HCT116 (cell line): ENCODE measurements at regions of chr11 and their contacts with region 1.

Region 1: GRCh38 chr11:69683764-69684333 is 8.7 kb upstream of the LTO1 start:
- DNase-seq: no peak
- ATAC-seq: peak; percentile 78
- H3K4me3 ChIP-seq: no peak overlapping the region
- H3K27ac ChIP-seq: no peak overlapping the region
- H3K4me1 ChIP-seq: peaks cover 11 to 45% of the 10 kb centered on the region in 2 experiments; a peak in 3 of 4 replicates
- H3K27me3 ChIP-seq: no peaks in the 10 kb centered on the region
- CTCF ChIP-seq: peak; percentile 56 to 73 (median 71); a peak in 5 of 6 replicates
- POLR2A ChIP-seq: no peak
- RAD21 ChIP-seq: peak; percentile 92

Region 2: DNA sequence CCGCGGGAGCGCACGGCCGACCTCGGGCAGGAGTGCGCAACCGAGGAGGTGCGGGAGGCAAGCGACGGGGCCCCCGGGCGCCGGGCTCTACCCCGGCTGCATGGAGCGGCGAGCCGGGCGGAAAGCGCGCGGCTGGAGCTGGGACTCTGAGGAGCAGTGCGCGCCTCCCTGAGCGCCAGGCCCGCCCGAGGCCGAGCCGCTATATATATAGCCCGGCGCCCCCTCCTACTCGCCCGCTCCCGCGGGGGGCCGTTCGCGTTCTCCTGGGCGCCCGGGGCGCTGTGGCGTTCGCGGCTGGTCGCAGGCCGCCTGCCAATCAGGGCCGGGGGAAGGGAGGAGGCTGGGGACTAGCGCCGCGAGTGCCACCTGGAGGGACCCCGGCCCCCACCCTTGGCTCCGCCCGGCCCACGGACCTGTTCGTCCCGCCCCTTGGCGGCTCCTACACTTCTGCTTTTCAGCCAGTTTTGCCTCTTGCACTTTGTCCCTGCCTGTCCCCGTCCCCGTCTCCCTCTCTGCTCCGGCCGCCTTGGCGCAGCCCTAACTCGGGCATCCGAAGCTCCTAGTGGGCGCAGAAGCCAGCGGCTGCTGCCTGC is 91.4 kb after region 1 on chr11 and contains the start of gene FGF4:
- CTCF ChIA-PET with region 1: no interaction called
- POLR2A ChIA-PET with region 1: no interaction called
- RAD21 ChIA-PET with region 1: no interaction called
- intact Hi-C with region 1: no loop called
- DNase-seq: no peak
- ATAC-seq: no peak
- H3K4me3 ChIP-seq: no peak within 1 kb of the TSS
- H3K27ac ChIP-seq: no peak within 1 kb of the TSS
- H3K4me1 ChIP-seq: no peaks in the 10 kb centered on the region
- H3K27me3 ChIP-seq: no peaks in the 10 kb centered on the region
- CTCF ChIP-seq: no peak
- POLR2A ChIP-seq: no peak
- RAD21 ChIP-seq: no peak
- total RNA-seq, gene FGF4: not detected

Region 3: GRCh38 chr11:69801519-69802335 is 117.9 kb after region 1 on chr11:
- CTCF ChIA-PET with region 1: no interaction called
- POLR2A ChIA-PET with region 1: no interaction called
- RAD21 ChIA-PET with region 1: no interaction called
- intact Hi-C with region 1: loop called (anchors 1 kb)
- DNase-seq: peak; percentile 64
- ATAC-seq: peak; percentile 64
- H3K4me3 ChIP-seq: no peak overlapping the region
- H3K27ac ChIP-seq: no peak overlapping the region
- H3K4me1 ChIP-seq: peaks cover 2 to 27% of the 10 kb centered on the region in 2 experiments; a peak in 3 of 4 replicates
- H3K27me3 ChIP-seq: no peaks in the 10 kb centered on the region
- CTCF ChIP-seq: peak; percentile 68 to 98 (median 97)
- POLR2A ChIP-seq: no peak
- RAD21 ChIP-seq: peak; percentile 70

Region 4: GRCh38 chr11:69817265-69818230 is 133.7 kb after region 1 on chr11:
- CTCF ChIA-PET with region 1: no interaction called
- POLR2A ChIA-PET with region 1: no interaction called
- RAD21 ChIA-PET with region 1: no interaction called
- intact Hi-C with region 1: no loop called
- DNase-seq: no peak
- ATAC-seq: peak; percentile 74
- H3K4me3 ChIP-seq: peak overlapping the region; percentile 46 to 61
- H3K27ac ChIP-seq: peak overlapping the region; percentile 16; the same call in 1 of the 2 replicates
- H3K4me1 ChIP-seq: peaks cover 3 to 16% of the 10 kb centered on the region in 2 experiments; a peak in 3 of 4 replicates
- H3K27me3 ChIP-seq: peaks cover 8% of the 10 kb centered on the region; the same call in 1 of the 2 replicates
- CTCF ChIP-seq: no peak
- POLR2A ChIP-seq: no peak
- RAD21 ChIP-seq: no peak

Region 5: GRCh38 chr11:69841859-69842698 is 158.2 kb after region 1 on chr11:
- CTCF ChIA-PET with region 1: no interaction called
- POLR2A ChIA-PET with region 1: no interaction called
- RAD21 ChIA-PET with region 1: no interaction called
- intact Hi-C with region 1: loop called (anchors 2 kb)
- DNase-seq: peak; percentile 49
- ATAC-seq: peak; percentile 28
- H3K4me3 ChIP-seq: no peak overlapping the region
- H3K27ac ChIP-seq: no peak overlapping the region
- H3K4me1 ChIP-seq: peaks cover 28 to 32% of the 10 kb centered on the region in 2 experiments
- H3K27me3 ChIP-seq: no peaks in the 10 kb centered on the region
- CTCF ChIP-seq: peak; percentile 74 to 82 (median 79); a peak in 5 of 6 replicates
- POLR2A ChIP-seq: no peak
- RAD21 ChIP-seq: peak; percentile 70

Region 6: GRCh38 chr11:69888483-69889076 is 204.7 kb after region 1 on chr11:
- CTCF ChIA-PET with region 1: no interaction called
- POLR2A ChIA-PET with region 1: no interaction called
- RAD21 ChIA-PET with region 1: no interaction called
- intact Hi-C with region 1: loop called (anchors 1 kb)
- DNase-seq: peak; percentile 57
- ATAC-seq: peak; percentile 89
- H3K4me3 ChIP-seq: no peak overlapping the region
- H3K27ac ChIP-seq: no peak overlapping the region
- H3K4me1 ChIP-seq: peaks cover 0 to 5% of the 10 kb centered on the region in 2 experiments; a peak in 1 of 4 replicates
- H3K27me3 ChIP-seq: no peaks in the 10 kb centered on the region
- CTCF ChIP-seq: peak; percentile 90 to 97 (median 97)
- POLR2A ChIP-seq: no peak
- RAD21 ChIP-seq: peak; percentile 93

Region 7: DNA sequence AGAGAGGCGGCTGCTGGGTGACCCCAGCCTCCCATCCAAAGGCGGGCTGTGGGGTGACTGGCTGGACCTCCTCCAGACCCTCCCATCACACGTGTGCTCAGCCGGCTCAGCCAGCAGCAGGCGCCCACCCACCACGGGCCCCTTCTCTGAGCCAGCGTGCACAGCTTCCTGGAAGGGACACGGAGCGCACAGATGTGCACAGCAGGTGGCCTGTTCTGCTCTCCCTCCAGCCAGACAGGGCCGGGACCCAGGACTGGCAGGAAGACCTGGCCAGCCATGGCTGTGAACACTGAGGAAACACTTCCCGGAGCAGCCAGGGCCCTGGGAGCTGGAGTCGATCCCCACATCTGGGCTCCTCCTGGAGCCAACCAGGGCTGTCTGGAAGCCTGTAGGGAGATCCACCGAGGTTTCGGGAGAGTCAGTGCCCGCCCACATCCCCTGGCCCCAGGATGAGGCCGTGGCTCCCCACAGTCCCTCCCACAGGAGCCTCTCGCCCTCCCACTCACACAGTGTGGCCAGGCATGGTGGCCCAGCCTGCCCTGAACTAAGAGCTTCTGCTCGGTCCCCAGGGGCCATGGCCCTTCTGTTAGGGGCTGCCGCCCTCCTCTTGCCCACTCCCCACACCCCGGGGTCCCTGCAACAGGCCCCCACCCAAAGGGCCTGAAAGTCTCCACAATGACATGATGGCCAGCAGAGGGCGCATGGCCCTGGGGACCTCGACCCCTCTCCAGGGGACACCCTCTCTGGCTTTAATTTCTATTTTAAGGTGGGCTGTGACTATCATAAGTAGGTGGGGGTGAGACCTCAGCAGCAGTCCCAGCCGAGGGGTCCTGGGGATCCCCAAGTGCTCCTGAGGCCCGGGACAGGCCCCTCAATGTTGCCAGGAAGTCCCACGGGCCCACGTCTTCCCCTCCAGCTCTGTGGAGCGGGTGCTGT is 226.0 kb after region 1 on chr11:
- CTCF ChIA-PET with region 1: interaction called, 5 read pairs
- POLR2A ChIA-PET with region 1: no interaction called
- RAD21 ChIA-PET with region 1: no interaction called
- intact Hi-C with region 1: loop called (anchors 1 kb)
- DNase-seq: no peak
- ATAC-seq: peak; percentile 47
- H3K4me3 ChIP-seq: no peak overlapping the region
- H3K27ac ChIP-seq: no peak overlapping the region
- H3K4me1 ChIP-seq: peaks cover 19 to 58% of the 10 kb centered on the region in 2 experiments
- H3K27me3 ChIP-seq: no peaks in the 10 kb centered on the region
- CTCF ChIP-seq: peak in 2 of 3 experiments; percentile 78 to 92; a peak in 4 of 6 replicates
- POLR2A ChIP-seq: no peak
- RAD21 ChIP-seq: no peak